ENCODE measurements at regions of chr4 and their contacts with region 1.

Region 1: DNA sequence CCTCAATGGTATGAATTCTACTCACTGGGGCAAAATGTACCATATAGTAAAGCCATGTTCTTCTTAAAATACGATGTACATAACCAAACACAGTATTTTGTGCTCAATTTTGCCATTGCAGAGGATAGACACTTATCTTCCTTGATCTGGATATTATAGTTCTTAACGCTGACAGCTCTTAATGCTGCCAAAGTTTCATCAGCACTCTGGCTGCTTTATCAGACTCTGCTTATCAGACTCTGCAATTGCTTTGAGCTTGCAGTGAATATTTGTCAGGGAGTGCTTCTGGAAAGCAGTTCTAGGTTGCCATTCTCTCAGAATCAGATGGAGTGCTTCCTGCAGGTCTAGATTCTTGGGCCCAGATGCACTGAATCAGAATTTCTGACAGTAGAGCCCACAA is 863.1 kb downstream of the CCSER1 start:
- DNase-seq: no peak
- H3K4me3 ChIP-seq: no peak overlapping the region
- H3K27ac ChIP-seq: no peak overlapping the region
- H3K4me1 ChIP-seq: no peaks in the 10 kb centered on the region
- H3K27me3 ChIP-seq: no peaks in the 10 kb centered on the region
- CTCF ChIP-seq: no peak
- POLR2A ChIP-seq: no peak

Region 2: DNA sequence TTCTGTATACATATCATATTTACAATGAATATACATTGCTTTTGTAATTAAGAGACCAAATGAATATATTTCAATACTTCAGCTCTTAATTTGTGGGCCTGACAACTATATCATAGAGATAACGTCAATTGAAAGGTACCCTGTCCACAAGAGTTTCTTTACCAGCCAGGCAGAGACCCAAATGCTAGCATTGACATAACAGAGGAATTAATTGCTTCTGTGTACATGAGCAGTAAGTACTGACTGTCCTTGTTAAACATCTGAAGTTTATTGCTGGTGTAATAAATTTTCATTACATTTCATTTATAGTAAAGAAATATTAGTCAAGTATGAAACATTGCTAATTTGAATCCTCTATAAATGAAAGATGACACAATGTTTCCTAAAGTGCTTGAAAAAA is 47.7 kb after region 1 on chr4:
- intact Hi-C with region 1: loop called (anchors 2 kb)
- DNase-seq: no peak
- H3K4me3 ChIP-seq: no peak overlapping the region
- H3K27ac ChIP-seq: no peak overlapping the region
- H3K4me1 ChIP-seq: no peaks in the 10 kb centered on the region
- H3K27me3 ChIP-seq: no peaks in the 10 kb centered on the region
- CTCF ChIP-seq: no peak
- POLR2A ChIP-seq: no peak

Region 3: GRCh38 chr4:91057871-91058270 is 67.6 kb after region 1 on chr4:
- intact Hi-C with region 1: no loop called
- DNase-seq: no peak
- H3K4me3 ChIP-seq: no peak overlapping the region
- H3K27ac ChIP-seq: no peak overlapping the region
- H3K4me1 ChIP-seq: no peaks in the 10 kb centered on the region
- H3K27me3 ChIP-seq: no peaks in the 10 kb centered on the region
- CTCF ChIP-seq: no peak
- POLR2A ChIP-seq: no peak

Measured in vagina (tissue), 2 donors.